ENCODE measurements at regions of chr18 and their contacts with region 1.

Region 1: GRCh38 chr18:24734058-24734457 is 273.6 kb downstream of the HRH4 start:
- DNase-seq: peak; percentile 16
- ATAC-seq: peak; percentile 87
- H3K4me3 ChIP-seq: no peak overlapping the region
- H3K27ac ChIP-seq: no peak overlapping the region
- H3K4me1 ChIP-seq: no peaks in the 10 kb centered on the region
- H3K27me3 ChIP-seq: no peaks in the 10 kb centered on the region; a peak in 2 of 5 replicates
- CTCF ChIP-seq: peak; percentile 28; the same call in 1 of the 2 replicates
- EP300 ChIP-seq: no peak
- POLR2A ChIP-seq: no peak
- RAD21 ChIP-seq: no peak

Region 2: DNA sequence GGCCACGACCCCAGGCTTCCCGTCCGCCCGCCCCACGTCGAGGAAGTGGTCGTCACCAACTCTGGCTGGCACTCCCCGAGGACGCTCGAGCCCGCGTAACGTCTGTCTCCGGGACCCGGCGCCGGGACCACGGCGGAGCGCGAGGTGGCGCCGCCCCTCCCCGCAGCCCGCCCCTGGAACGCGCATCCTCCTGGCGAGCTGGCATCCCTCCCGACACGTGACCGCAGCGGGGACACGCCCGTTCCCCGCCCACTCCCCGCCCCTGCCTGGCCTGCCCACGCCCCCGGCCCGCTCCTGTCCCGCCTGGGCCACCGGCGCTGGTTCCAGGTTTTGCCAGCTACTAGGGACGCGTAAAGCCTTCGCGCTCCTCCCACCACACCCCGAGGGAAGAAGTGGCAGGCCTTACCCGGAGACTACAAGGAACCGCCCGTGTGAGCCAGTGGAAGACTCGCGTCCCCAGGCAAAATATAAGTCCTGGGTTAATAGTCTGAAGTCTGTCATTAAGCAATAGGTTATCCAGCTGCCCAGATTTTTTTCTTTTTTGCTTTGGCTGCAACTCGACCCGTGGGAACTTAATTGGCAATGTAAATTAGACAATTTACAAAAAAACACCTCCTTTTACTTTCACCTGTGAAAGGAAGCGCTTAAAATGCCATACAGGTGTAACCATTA is 336.2 kb before region 1 on chr18 and contains the start of gene OSBPL1A:
- CTCF ChIA-PET with region 1: no interaction called
- POLR2A ChIA-PET with region 1: no interaction called
- in situ Hi-C with region 1: no loop called
- intact Hi-C with region 1: no loop called
- DNase-seq: peak; percentile 28
- ATAC-seq: peak; percentile 90
- H3K4me3 ChIP-seq: peak within 1 kb of the TSS in 2 of 3 experiments; percentile 31 to 46; a peak in 4 of 6 replicates
- H3K27ac ChIP-seq: no peak within 1 kb of the TSS
- H3K4me1 ChIP-seq: peaks cover 7% of the 10 kb centered on the region; the same call in 1 of the 2 replicates
- H3K27me3 ChIP-seq: peaks cover 0 to 33% of the 10 kb centered on the region in 2 experiments
- CTCF ChIP-seq: no peak
- EP300 ChIP-seq: no peak
- POLR2A ChIP-seq: no peak
- RAD21 ChIP-seq: no peak
- total RNA-seq, gene OSBPL1A: 0.02 and 0.13 TPM in 2 replicates

Region 3: GRCh38 chr18:24593886-24594285 is 140.2 kb before region 1 on chr18:
- CTCF ChIA-PET with region 1: no interaction called
- POLR2A ChIA-PET with region 1: no interaction called
- in situ Hi-C with region 1: loop called (anchors 5 kb)
- intact Hi-C with region 1: no loop called
- DNase-seq: no peak
- ATAC-seq: no peak
- H3K4me3 ChIP-seq: no peak overlapping the region
- H3K27ac ChIP-seq: no peak overlapping the region
- H3K4me1 ChIP-seq: no peaks in the 10 kb centered on the region
- H3K27me3 ChIP-seq: peaks cover 2 to 7% of the 10 kb centered on the region in 2 experiments; a peak in 2 of 5 replicates
- CTCF ChIP-seq: no peak
- EP300 ChIP-seq: no peak
- POLR2A ChIP-seq: no peak
- RAD21 ChIP-seq: no peak

Region 4: GRCh38 chr18:24600076-24600654 is 133.9 kb before region 1 on chr18:
- CTCF ChIA-PET with region 1: interaction called, 7 read pairs
- POLR2A ChIA-PET with region 1: no interaction called
- in situ Hi-C with region 1: no loop called
- intact Hi-C with region 1: loop called (anchors 2 kb)
- DNase-seq: peak; percentile 40
- ATAC-seq: 0 out of 3 replicates have a peak, but pooled peaks have one; percentile 36
- H3K4me3 ChIP-seq: no peak overlapping the region
- H3K27ac ChIP-seq: no peak overlapping the region
- H3K4me1 ChIP-seq: no peaks in the 10 kb centered on the region
- H3K27me3 ChIP-seq: peaks cover 2 to 4% of the 10 kb centered on the region in 2 experiments; a peak in 2 of 5 replicates
- CTCF ChIP-seq: peak; percentile 50
- EP300 ChIP-seq: no peak
- POLR2A ChIP-seq: no peak
- RAD21 ChIP-seq: no peak

Measured in HepG2 (cell line).